ENCODE measurements at regions of chr18 and their contacts with region 1.

Region 1: DNA sequence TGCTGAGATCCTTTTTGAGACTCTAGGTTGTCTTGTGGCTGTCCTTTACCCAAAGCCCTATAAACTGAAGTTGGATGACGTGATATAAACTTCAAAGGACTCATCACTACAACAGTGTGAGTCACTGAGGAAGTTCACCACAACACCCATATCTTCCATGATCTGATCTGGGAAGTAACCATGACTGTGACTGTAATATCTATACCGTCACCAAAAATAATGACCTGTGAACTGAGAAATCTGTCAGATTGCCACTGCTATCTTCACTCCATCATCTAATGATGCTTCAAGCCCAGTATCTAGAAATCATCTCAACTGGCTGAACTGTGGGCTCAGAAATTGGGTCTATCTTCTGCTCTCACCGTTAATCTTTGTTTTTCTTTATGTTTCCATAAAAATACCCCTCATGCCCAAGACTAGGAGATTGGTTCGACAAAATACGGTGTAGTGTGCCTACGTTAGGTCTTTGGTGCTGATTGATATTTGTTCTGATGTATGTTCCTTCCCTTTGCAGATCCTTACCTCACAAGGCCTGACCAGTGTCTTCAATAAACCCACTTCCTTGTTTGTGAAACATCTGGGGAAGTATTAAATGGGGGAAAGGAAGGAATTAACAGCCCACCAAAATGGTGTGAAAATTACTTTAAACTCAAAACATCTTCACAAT is 78.2 kb downstream of the MYL12B start:
- DNase-seq: no peak
- H3K4me3 Mint-ChIP-seq: no peak overlapping the region
- H3K27ac Mint-ChIP-seq: peak overlapping the region; percentile 40
- H3K4me1 Mint-ChIP-seq: peaks cover 14% of the 10 kb centered on the region
- H3K27me3 Mint-ChIP-seq: no peaks in the 10 kb centered on the region

Region 2: DNA sequence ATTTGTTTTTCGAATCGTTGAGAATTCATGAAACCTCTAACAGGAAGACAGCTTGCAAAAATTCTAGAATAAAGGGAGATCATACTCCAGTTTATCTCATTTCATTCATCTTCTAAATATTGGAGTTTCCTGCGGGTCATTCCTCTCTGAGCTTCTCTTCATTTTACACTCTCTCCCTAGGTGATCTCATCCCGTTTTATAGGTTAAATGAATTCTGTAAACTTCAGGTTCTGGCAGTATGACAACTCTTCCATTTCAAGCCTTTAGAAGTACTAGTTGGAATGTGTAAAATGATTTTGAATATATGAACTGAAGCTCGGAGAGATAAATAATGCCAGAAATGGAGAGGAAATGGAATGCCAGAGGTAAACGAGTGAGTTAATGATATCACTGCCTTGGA is 1081.2 kb before region 1 on chr18:
- intact Hi-C with region 1: no loop called
- DNase-seq: peak; percentile 4
- H3K4me3 Mint-ChIP-seq: no peak overlapping the region
- H3K27ac Mint-ChIP-seq: no peak overlapping the region
- H3K4me1 Mint-ChIP-seq: no peaks in the 10 kb centered on the region
- H3K27me3 Mint-ChIP-seq: no peaks in the 10 kb centered on the region

Region 3: GRCh38 chr18:2571200-2572143 is 768.7 kb before region 1 on chr18 and contains the starts of genes METTL4 and NDC80:
- intact Hi-C with region 1: no loop called
- DNase-seq: peak; percentile 96
- H3K4me3 Mint-ChIP-seq: peak within 1 kb of the TSS; percentile 97
- H3K27ac Mint-ChIP-seq: peak within 1 kb of the TSS; percentile 98
- H3K4me1 Mint-ChIP-seq: peaks cover 50% of the 10 kb centered on the region
- H3K27me3 Mint-ChIP-seq: no peaks in the 10 kb centered on the region
- total RNA-seq, gene METTL4: 17.7 and 18.4 TPM in 2 replicates
- total RNA-seq, gene NDC80: 42.4 and 50.5 TPM in 2 replicates

Region 4: GRCh38 chr18:3305354-3305762 is 34.8 kb before region 1 on chr18:
- intact Hi-C with region 1: loop called (anchors 1 kb)
- DNase-seq: peak; percentile 85
- H3K4me3 Mint-ChIP-seq: peak overlapping the region; percentile 60
- H3K27ac Mint-ChIP-seq: peak overlapping the region; percentile 92
- H3K4me1 Mint-ChIP-seq: peaks cover 19% of the 10 kb centered on the region
- H3K27me3 Mint-ChIP-seq: peaks cover 22% of the 10 kb centered on the region

Region 5: GRCh38 chr18:3323900-3324299 is 16.2 kb before region 1 on chr18:
- intact Hi-C with region 1: no loop called
- DNase-seq: no peak
- H3K4me3 Mint-ChIP-seq: no peak overlapping the region
- H3K27ac Mint-ChIP-seq: no peak overlapping the region
- H3K4me1 Mint-ChIP-seq: peaks cover 5% of the 10 kb centered on the region
- H3K27me3 Mint-ChIP-seq: peaks cover 18% of the 10 kb centered on the region

Region 6: DNA sequence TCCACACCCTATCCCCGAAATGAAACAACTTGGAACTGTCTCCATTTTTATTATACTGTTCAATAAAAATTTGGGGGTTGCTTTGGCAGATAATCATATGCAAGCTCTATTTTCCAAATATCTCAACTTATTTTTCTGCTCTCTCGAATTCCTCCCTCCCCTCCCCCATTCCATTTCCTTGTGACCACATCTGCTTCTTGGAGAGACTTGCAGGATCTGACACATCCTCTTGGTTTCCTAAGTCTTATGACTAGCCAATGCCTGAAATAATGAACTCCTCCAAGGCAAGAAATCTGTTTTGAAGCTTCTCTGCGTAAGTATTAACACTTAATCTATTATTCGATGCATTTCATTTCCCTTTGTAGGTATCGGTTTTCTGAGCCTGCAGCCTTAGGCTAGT is 125.9 kb after region 1 on chr18:
- intact Hi-C with region 1: no loop called
- DNase-seq: no peak
- H3K4me3 Mint-ChIP-seq: no peak overlapping the region
- H3K27ac Mint-ChIP-seq: no peak overlapping the region
- H3K4me1 Mint-ChIP-seq: peaks cover 12% of the 10 kb centered on the region
- H3K27me3 Mint-ChIP-seq: no peaks in the 10 kb centered on the region